BJ (cell line): ENCODE measurements at regions of chr9 and their contacts with region 1.

Region 1: GRCh38 chr9:5582835-5583195 is 46.1 kb upstream of the RIC1 start:
- DNase-seq: no peak
- H3K4me3 ChIP-seq: no peak overlapping the region
- H3K27me3 ChIP-seq: no peaks in the 10 kb centered on the region
- CTCF ChIP-seq: no peak

Region 2: DNA sequence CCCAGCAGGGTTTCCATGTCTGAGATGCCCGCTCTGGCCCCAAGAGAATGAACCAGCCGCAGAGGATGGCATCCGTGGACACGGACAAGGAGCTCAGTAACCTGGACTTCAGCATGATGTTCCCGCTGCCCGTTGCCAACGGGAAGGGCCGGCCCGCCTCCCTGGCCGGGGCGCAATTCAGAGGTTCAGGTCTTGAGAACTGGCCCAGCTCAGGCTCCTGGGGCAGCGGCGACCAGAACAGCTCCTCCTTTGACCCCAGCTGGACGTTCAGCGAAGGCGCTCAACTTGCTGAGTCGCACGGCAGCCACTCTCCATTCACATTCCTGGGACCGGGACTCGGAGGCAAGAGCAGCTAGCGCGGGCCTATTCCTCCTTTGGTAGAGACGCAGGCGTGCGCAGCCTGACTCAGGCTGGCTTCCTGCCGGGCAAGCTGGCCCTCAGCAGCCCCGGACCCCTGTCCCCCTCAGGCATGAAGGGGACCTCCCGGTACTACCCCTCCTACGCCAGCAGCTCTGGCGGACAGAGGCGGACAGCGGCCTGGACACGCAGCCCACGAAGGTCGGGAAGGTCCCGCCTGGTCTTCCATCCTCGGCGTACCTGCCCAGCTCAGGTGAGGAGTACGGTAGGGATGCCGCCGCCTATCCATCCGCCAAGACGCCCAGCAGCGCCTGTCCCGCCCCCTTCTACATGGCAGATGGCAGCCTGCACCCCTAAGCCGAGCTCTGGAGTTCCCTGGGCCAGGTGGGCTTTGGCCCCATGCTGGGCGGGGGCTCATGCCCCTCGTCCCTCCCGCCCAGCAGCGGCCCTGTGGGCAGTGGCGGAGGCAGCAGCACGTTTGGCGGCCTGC is 471.7 kb before region 1 on chr9:
- CTCF ChIA-PET with region 1: no interaction called
- POLR2A ChIA-PET with region 1: no interaction called
- DNase-seq: no peak
- H3K4me3 ChIP-seq: no peak overlapping the region
- H3K27me3 ChIP-seq: no peaks in the 10 kb centered on the region
- CTCF ChIP-seq: no peak

Region 3: GRCh38 chr9:5186416-5187169 is 396.2 kb before region 1 on chr9:
- CTCF ChIA-PET with region 1: interaction called, 32 read pairs
- POLR2A ChIA-PET with region 1: no interaction called
- DNase-seq: peak; percentile 3
- H3K4me3 ChIP-seq: no peak overlapping the region
- H3K27me3 ChIP-seq: no peaks in the 10 kb centered on the region
- CTCF ChIP-seq: peak; percentile 80

Region 4: DNA sequence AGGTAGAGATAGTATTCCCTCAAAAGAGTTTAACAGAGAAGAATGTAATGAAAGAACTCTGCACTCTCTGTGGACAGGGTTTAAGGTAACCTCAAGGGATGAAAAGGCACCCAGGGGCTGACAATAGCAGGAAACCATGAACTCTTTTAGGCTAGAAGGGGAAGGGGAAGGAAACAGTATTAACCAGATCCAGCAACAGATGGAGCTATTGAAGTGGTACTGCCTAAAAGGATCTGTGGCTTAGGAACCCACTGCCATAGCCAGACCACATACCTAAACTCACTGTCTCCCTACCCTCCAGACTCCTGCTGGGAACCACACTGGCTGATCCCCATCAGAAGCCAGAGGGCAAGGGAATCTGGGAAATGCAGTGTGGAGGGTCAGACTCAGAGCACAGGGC is 180.6 kb before region 1 on chr9:
- CTCF ChIA-PET with region 1: no interaction called
- POLR2A ChIA-PET with region 1: no interaction called
- DNase-seq: no peak
- H3K4me3 ChIP-seq: no peak overlapping the region
- H3K27me3 ChIP-seq: no peaks in the 10 kb centered on the region
- CTCF ChIP-seq: no peak

Region 5: DNA sequence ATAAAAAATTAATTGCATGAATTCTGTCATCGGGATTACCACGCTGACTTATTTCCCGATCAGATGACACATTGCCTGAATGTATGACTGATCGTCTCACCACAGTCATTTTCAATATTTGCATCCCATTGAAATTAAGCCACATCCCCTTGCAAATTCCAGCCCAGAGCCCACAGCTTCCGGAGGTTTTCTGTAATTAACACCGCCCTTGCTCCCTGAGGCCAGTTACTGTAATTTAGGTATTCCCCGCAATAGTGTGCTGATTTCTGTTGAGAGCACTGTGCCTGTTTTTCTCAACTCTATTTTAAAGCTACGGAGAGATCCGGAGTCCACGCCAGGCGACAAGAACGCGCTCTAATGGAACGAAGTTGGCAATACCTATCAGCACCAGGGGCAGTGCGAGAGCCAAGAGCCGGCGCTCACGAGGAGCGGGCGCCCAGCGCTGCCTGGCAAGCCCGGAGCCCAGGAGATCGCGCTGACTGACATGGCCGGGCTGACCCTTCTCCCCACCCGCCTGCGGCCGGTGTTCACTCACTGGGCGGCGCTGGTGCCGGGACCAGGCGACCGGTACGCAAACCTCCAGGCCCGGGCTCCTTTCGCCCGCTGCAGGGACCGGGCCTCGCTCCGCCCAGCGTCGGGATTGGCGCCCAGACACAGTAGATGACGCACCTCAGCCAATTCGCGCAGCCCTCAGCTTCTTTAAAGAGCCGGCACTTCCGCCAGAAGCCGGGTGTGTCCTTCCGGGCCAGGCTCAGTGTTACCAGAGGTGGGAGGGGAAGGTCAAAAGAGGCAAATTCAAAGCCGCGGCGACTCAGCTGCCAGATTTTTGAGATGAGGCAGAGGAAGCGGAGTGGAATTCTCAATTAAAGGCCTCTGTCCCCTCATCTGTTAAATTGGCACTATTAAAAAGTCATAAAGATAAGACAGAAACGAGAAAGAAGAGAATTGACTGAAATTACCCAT is 145.3 kb before region 1 on chr9 and contains the start of gene PLGRKT:
- CTCF ChIA-PET with region 1: interaction called, 15 read pairs
- POLR2A ChIA-PET with region 1: no interaction called
- DNase-seq: peak; percentile 62
- H3K4me3 ChIP-seq: peak within 1 kb of the TSS; percentile 64
- H3K27me3 ChIP-seq: no peaks in the 10 kb centered on the region
- CTCF ChIP-seq: no peak; the same call in none of the 2 replicates
- polyA plus RNA-seq, gene PLGRKT: 7.7 and 14.2 TPM in 2 replicates

Region 6: DNA sequence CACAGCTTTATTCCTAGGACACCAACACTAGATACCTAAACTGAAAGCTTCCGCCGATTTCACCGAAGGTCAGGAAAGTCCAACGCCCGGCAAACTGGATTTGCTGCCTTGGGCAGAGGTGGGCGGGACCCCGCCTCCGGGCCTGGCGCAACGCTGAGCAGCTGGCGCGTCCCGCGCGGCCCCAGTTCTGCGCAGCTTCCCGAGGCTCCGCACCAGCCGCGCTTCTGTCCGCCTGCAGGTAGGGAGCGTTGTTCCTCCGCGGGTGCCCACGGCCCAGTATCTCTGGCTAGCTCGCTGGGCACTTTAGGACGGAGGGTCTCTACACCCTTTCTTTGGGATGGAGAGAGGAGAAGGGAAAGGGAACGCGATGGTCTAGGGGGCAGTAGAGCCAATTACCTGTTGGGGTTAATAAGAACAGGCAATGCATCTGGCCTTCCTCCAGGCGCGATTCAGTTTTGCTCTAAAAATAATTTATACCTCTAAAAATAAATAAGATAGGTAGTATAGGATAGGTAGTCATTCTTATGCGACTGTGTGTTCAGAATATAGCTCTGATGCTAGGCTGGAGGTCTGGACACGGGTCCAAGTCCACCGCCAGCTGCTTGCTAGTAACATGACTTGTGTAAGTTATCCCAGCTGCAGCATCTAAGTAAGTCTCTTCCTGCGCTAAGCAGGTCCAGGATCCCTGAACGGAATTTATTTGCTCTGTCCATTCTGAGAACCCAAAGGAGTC is 132.3 kb before region 1 on chr9 and contains the start of gene CD274:
- CTCF ChIA-PET with region 1: interaction called, 23 read pairs
- POLR2A ChIA-PET with region 1: no interaction called
- DNase-seq: peak; percentile 49
- H3K4me3 ChIP-seq: peak within 1 kb of the TSS; percentile 72
- H3K27me3 ChIP-seq: no peaks in the 10 kb centered on the region
- CTCF ChIP-seq: peak; percentile 75
- polyA plus RNA-seq, gene CD274: 3.8 and 4.4 TPM in 2 replicates

Region 7: GRCh38 chr9:5611321-5612186 is 28.7 kb after region 1 on chr9:
- CTCF ChIA-PET with region 1: no interaction called
- POLR2A ChIA-PET with region 1: no interaction called
- DNase-seq: peak; percentile 58
- H3K4me3 ChIP-seq: no peak overlapping the region
- H3K27me3 ChIP-seq: no peaks in the 10 kb centered on the region
- CTCF ChIP-seq: no peak

Region 8: GRCh38 chr9:5708414-5708813 is 125.6 kb after region 1 on chr9:
- CTCF ChIA-PET with region 1: no interaction called
- POLR2A ChIA-PET with region 1: interaction called, 10 read pairs
- DNase-seq: no peak
- H3K4me3 ChIP-seq: no peak overlapping the region
- H3K27me3 ChIP-seq: no peaks in the 10 kb centered on the region
- CTCF ChIP-seq: no peak